ENCODE measurements at regions of chr3 and their contacts with region 1.

Region 1: DNA sequence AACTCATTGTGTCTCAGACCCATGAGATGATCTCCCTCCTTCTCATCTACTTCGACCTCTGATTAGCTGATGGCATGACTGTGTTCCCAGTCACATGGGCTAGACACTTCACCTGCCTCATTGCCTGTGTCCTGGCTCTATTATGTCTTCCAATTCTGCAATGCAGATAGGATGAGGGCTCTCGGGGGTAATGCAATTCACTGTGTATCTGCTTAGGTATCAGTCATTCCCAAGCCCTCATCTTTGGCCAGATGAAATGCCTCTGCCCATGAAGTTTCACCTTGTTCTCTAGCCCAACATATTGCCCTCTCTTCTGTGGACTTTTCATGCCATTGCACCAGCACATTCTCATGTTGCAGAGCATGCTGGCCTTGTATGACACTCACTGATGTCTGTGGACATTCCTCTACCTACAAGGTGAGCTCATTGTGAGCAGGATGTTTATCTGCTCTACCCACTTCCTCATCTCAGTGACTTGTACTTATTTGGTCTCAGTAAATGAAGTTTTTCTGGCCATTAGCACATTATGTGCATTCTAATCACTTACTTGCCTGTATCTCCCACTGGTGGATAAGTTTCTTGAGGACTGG is 32.3 kb downstream of the MOBP start:
- DNase-seq: no peak
- ATAC-seq: no peak
- H3K4me3 ChIP-seq: no peak overlapping the region
- H3K27ac ChIP-seq: no peak overlapping the region
- H3K4me1 ChIP-seq: peaks cover 6% of the 10 kb centered on the region; the same call in 1 of the 3 replicates
- CTCF ChIP-seq: no peak
- EP300 ChIP-seq: no peak
- POLR2A ChIP-seq: no peak
- RAD21 ChIP-seq: no peak

Region 2: GRCh38 chr3:39414421-39414907 is 85.3 kb before region 1 on chr3:
- CTCF ChIA-PET with region 1: interaction called, 58 read pairs
- POLR2A ChIA-PET with region 1: interaction called, 3 read pairs
- DNase-seq: peak in 1 of 2 experiments; percentile 22
- ATAC-seq: peak; percentile 12 to 21
- H3K4me3 ChIP-seq: no peak overlapping the region
- H3K27ac ChIP-seq: 0 out of 6 replicates have a peak overlapping the region, but pooled peaks of 1 of the 2 experiments have one; percentile 4
- H3K4me1 ChIP-seq: peaks cover 30% of the 10 kb centered on the region
- CTCF ChIP-seq: no peak
- EP300 ChIP-seq: no peak
- POLR2A ChIP-seq: no peak
- RAD21 ChIP-seq: no peak

Region 3: DNA sequence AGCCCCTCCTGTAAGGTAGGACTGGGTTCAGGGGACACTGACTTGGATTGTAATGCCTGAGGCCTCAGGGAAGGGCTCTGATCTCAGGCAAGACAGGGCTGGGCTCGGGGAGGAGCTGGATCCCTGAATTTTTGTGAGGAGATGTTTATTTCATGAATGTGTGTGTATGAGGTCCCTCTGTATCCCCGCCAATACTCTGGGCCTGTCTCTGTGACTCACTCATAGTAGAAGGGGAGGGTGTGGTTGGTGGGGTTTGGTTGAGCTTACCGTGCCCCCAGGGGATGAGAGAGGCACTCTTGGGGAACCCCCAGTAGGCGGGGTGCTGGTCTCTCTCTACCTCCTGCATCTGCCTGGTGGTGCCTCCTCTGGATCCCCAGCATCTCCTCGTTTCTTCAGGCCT is 65.2 kb before region 1 on chr3:
- CTCF ChIA-PET with region 1: interaction called, 10 read pairs
- POLR2A ChIA-PET with region 1: no interaction called
- DNase-seq: no peak
- ATAC-seq: no peak; a peak in 1 of 6 replicates
- H3K4me3 ChIP-seq: no peak overlapping the region
- H3K27ac ChIP-seq: no peak overlapping the region
- H3K4me1 ChIP-seq: no peaks in the 10 kb centered on the region
- CTCF ChIP-seq: no peak
- EP300 ChIP-seq: no peak
- POLR2A ChIP-seq: no peak
- RAD21 ChIP-seq: no peak

Region 4: GRCh38 chr3:39447637-39448483 is 51.9 kb before region 1 on chr3:
- CTCF ChIA-PET with region 1: interaction called, 113 read pairs
- POLR2A ChIA-PET with region 1: no interaction called
- DNase-seq: peak; percentile 81 to 88
- ATAC-seq: peak; percentile 93 to 98
- H3K4me3 ChIP-seq: no peak overlapping the region
- H3K27ac ChIP-seq: no peak overlapping the region
- H3K4me1 ChIP-seq: no peaks in the 10 kb centered on the region
- CTCF ChIP-seq: peak; percentile 87
- EP300 ChIP-seq: no peak
- POLR2A ChIP-seq: no peak
- RAD21 ChIP-seq: peak; percentile 74 to 81

Region 5: GRCh38 chr3:39485547-39485946 is 14.2 kb before region 1 on chr3:
- CTCF ChIA-PET with region 1: interaction called, 14 read pairs
- POLR2A ChIA-PET with region 1: no interaction called
- DNase-seq: no peak
- ATAC-seq: no peak
- H3K4me3 ChIP-seq: no peak overlapping the region
- H3K27ac ChIP-seq: no peak overlapping the region
- H3K4me1 ChIP-seq: no peaks in the 10 kb centered on the region
- CTCF ChIP-seq: no peak
- EP300 ChIP-seq: no peak
- POLR2A ChIP-seq: no peak
- RAD21 ChIP-seq: no peak

Region 6: GRCh38 chr3:39515681-39516441 is 16.1 kb after region 1 on chr3:
- CTCF ChIA-PET with region 1: interaction called, 18 read pairs
- POLR2A ChIA-PET with region 1: no interaction called
- DNase-seq: no peak
- ATAC-seq: no peak
- H3K4me3 ChIP-seq: no peak overlapping the region
- H3K27ac ChIP-seq: no peak overlapping the region
- H3K4me1 ChIP-seq: no peaks in the 10 kb centered on the region
- CTCF ChIP-seq: no peak
- EP300 ChIP-seq: no peak
- POLR2A ChIP-seq: no peak
- RAD21 ChIP-seq: no peak

Region 7: GRCh38 chr3:39724233-39724846 is 224.6 kb after region 1 on chr3:
- CTCF ChIA-PET with region 1: no interaction called
- POLR2A ChIA-PET with region 1: no interaction called
- DNase-seq: no peak
- ATAC-seq: peak; percentile 24 to 48; a peak in 2 of 6 replicates
- H3K4me3 ChIP-seq: no peak overlapping the region
- H3K27ac ChIP-seq: no peak overlapping the region
- H3K4me1 ChIP-seq: no peaks in the 10 kb centered on the region
- CTCF ChIP-seq: no peak; the same call in 2 of the 3 replicates
- EP300 ChIP-seq: no peak
- POLR2A ChIP-seq: no peak
- RAD21 ChIP-seq: peak; percentile 32 to 43; a peak in 2 of 5 replicates